SK-N-SH (cell line): ENCODE measurements at regions of chr3 and their contacts with region 1.

Region 1: DNA sequence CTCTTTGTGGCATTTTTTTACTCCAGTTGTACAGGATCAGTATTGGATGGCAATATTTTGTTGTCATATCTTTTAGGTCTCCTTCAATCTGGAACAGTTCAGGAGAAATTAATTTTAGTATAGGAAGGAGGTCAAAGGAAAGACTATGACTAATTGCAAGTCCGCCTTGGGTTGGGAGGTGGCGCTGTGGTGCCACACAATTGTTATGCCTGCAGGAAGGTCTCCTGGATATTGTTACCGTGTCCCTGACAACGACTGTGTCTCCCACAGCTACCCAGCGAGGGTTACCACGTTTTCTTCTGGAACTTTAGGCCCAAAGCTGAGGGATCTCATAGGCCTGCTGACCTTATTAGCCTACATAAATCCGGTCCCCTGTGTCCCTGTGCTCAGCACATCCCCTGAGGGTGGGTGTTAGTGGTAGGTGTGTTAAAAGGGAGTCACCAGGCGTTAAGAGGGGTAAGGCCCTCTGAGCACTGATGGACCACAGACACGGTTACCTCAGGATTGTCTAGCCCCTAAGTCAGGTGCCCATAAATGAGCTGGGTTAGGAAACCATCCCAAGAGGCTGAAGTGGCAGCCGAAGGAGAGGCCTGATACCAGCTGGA is 31.5 kb downstream of the KCNAB1 start:
- DNase-seq: peak; percentile 68
- H3K4me3 ChIP-seq: no peak overlapping the region; a peak in 1 of 4 replicates
- H3K27ac ChIP-seq: peak overlapping the region in 1 of 2 experiments; percentile 34; a peak in 2 of 4 replicates
- H3K4me1 ChIP-seq: peaks cover 0 to 8% of the 10 kb centered on the region in 2 experiments; a peak in 1 of 4 replicates
- H3K27me3 ChIP-seq: no peaks in the 10 kb centered on the region
- CTCF ChIP-seq: peak; percentile 92
- EP300 ChIP-seq: 0 out of 4 replicates have a peak, but pooled peaks of 1 of the 2 experiments have one; percentile 26
- RAD21 ChIP-seq: peak; percentile 99

Region 2: DNA sequence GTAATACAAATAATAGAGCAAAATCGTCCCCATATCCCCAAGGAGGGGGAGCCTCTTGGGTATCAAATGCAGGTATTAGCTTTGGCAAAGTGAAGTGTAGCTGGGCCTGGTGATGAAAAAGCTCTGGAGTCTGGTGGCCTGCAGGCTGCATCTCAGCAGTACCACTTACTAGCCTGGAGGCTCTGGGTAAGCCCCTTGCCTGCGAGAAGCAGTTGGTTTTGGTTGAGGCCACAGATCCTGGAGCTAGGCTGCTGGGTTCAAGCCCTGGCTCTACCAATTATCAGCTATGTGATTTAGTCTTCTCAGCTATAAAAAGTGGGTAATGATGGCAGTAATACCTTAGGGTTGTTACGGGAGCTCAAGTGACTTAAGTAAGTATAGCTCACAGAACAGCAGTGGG is 25.5 kb before region 1 on chr3:
- CTCF ChIA-PET with region 1: interaction called, 37 read pairs
- POLR2A ChIA-PET with region 1: no interaction called
- DNase-seq: no peak
- H3K4me3 ChIP-seq: no peak overlapping the region
- H3K27ac ChIP-seq: no peak overlapping the region
- H3K4me1 ChIP-seq: no peaks in the 10 kb centered on the region
- H3K27me3 ChIP-seq: no peaks in the 10 kb centered on the region; the same call in 1 of the 2 replicates
- CTCF ChIP-seq: no peak
- EP300 ChIP-seq: no peak
- RAD21 ChIP-seq: no peak

Region 3: DNA sequence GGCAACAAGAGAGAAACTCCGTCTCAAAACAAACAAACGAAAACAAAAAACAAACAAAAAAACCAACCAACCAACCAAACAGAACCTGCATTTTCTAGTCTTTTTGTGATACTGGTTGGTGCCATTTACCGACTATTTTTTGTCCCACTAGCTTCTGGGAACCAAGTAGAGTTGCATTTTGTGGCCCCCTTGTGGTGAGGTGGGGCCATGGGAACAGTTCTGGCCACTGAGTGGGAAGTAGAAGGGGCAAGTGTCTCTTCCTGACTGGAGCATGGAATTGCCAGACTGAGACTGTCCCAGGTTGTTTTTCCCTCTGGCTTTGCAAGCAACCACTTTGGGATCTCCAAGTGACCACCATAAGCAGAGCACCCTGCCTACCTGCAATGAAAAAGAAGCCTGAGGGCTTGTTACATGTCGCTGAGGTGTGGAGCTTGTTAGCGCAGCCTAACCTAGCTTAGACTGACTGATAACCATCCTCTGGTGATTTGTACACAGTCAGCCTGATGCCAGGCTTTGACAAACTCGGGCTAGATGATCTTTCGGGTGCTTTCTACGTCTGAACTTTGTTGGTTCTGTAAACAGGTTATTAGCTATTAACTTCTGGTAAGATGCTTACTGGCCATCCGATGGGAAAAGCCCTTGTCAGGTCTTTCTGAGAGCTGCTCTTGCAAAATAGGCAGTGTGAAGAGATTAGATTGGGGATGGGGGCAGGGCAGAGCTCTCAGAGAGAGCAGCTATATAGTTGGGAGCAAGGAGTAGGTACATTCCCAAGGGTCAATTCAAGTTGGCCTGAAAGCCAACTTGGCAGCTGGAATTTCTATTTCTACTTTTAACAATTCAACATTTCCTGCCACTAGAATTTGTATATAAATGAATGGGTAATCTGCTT is 230.8 kb after region 1 on chr3:
- CTCF ChIA-PET with region 1: interaction called, 24 read pairs
- POLR2A ChIA-PET with region 1: no interaction called
- DNase-seq: no peak
- H3K4me3 ChIP-seq: no peak overlapping the region
- H3K27ac ChIP-seq: peak overlapping the region; percentile 48 to 87; a peak in 3 of 4 replicates
- H3K4me1 ChIP-seq: peaks cover 25 to 29% of the 10 kb centered on the region in 2 experiments; a peak in 3 of 4 replicates
- H3K27me3 ChIP-seq: no peaks in the 10 kb centered on the region
- CTCF ChIP-seq: peak; percentile 58
- EP300 ChIP-seq: no peak
- RAD21 ChIP-seq: peak; percentile 40

Region 4: GRCh38 chr3:156483961-156484787 is 332.2 kb after region 1 on chr3:
- CTCF ChIA-PET with region 1: interaction called, 20 read pairs
- POLR2A ChIA-PET with region 1: no interaction called
- DNase-seq: no peak
- H3K4me3 ChIP-seq: peak overlapping the region; percentile 12 to 48; a peak in 3 of 4 replicates
- H3K27ac ChIP-seq: peak overlapping the region; percentile 91 to 96
- H3K4me1 ChIP-seq: peaks cover 6 to 19% of the 10 kb centered on the region in 2 experiments
- H3K27me3 ChIP-seq: no peaks in the 10 kb centered on the region
- CTCF ChIP-seq: no peak
- EP300 ChIP-seq: peak; percentile 74 to 98
- RAD21 ChIP-seq: no peak

Region 5: GRCh38 chr3:156535162-156535627 is 383.3 kb after region 1 on chr3:
- CTCF ChIA-PET with region 1: interaction called, 25 read pairs
- POLR2A ChIA-PET with region 1: no interaction called
- DNase-seq: no peak
- H3K4me3 ChIP-seq: no peak overlapping the region
- H3K27ac ChIP-seq: peak overlapping the region; percentile 62 to 93
- H3K4me1 ChIP-seq: peaks cover 0 to 19% of the 10 kb centered on the region in 2 experiments; a peak in 2 of 4 replicates
- H3K27me3 ChIP-seq: no peaks in the 10 kb centered on the region
- CTCF ChIP-seq: peak; percentile 57
- EP300 ChIP-seq: no peak
- RAD21 ChIP-seq: peak; percentile 41

Region 6: DNA sequence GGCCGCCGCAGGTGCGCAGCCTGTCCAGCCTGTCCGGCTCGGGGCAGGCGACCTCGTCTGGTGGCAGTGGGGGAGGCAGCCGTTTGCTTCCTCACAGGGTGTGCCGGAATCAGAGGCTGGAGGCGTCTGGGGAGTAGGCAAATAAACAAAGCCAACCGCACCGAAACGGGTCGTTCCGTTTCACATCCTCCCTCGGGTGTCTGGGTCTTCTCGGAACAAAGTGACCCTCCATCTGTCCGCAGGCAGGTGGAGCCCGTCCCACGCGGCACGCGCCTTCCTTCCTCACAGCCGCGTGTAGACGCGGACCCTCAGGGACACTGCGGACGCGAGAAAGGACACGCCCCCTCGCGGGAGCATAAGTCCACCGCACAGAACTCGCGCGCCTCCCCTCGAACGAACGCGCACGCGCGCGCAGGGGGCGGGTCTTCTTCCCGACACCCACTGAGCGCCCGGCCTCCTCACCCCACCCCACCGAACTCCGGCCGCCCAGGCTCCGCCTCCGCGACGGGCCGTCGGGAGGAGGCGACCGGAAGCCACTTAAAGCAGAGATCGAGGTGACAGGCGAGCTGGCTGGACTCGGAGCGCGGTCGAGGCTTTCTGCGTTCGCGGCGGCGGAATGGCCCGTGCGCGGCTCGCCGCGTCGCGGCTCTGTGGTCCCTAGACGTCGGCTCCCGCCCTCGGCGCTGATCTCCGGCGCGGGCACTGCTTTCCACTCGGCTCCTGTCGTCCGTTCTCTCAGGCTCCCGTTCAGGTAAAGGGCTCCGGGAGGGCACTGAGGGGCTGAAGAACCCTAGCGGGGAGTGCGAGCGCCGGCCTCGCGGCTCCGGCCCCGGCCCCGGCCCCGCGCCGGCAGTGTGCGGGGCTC is 522.4 kb after region 1 on chr3 and contains the start of gene TIPARP:
- CTCF ChIA-PET with region 1: interaction called, 35 read pairs
- POLR2A ChIA-PET with region 1: no interaction called
- DNase-seq: peak; percentile 99
- H3K4me3 ChIP-seq: peak within 1 kb of the TSS; percentile 89 to 91
- H3K27ac ChIP-seq: peak within 1 kb of the TSS; percentile 86 to 92
- H3K4me1 ChIP-seq: peaks cover 0 to 7% of the 10 kb centered on the region in 2 experiments; a peak in 2 of 4 replicates
- H3K27me3 ChIP-seq: no peaks in the 10 kb centered on the region
- CTCF ChIP-seq: peak; percentile 67
- EP300 ChIP-seq: peak; percentile 26 to 31; a peak in 1 of 4 replicates
- RAD21 ChIP-seq: peak; percentile 64
- polyA plus RNA-seq, gene TIPARP: 6.2 TPM in 2 replicates

Region 7: GRCh38 chr3:157136647-157137387 is 984.9 kb after region 1 on chr3:
- CTCF ChIA-PET with region 1: interaction called, 11 read pairs
- POLR2A ChIA-PET with region 1: no interaction called
- DNase-seq: no peak
- H3K4me3 ChIP-seq: no peak overlapping the region
- H3K27ac ChIP-seq: no peak overlapping the region
- H3K4me1 ChIP-seq: peaks cover 4 to 27% of the 10 kb centered on the region in 2 experiments; a peak in 3 of 4 replicates
- H3K27me3 ChIP-seq: no peaks in the 10 kb centered on the region
- CTCF ChIP-seq: no peak
- EP300 ChIP-seq: no peak
- RAD21 ChIP-seq: no peak